Activated CD8-positive, alpha-beta T cell treated with anti-CD3 and anti-CD28 coated beads, Interleukin-2, amount 10 ng/mL, durations not matched to agents 7 days and 5 days (primary cell): ENCODE measurements at regions of chr3 and their contacts with region 1.

Region 1: GRCh38 chr3:186617038-186617946 is 4.4 kb downstream of the AHSG start:
- DNase-seq: peak; percentile 88
- ATAC-seq: peak; percentile 99
- H3K4me3 Mint-ChIP-seq: peak overlapping the region; percentile 64
- H3K27ac Mint-ChIP-seq: peak overlapping the region; percentile 59
- H3K4me1 Mint-ChIP-seq: peaks cover 24% of the 10 kb centered on the region
- H3K27me3 Mint-ChIP-seq: peaks cover 49% of the 10 kb centered on the region

Region 2: GRCh38 chr3:186259612-186260383 is 357.5 kb before region 1 on chr3:
- CTCF ChIA-PET with region 1: interaction called, 18 read pairs
- POLR2A ChIA-PET with region 1: no interaction called
- DNase-seq: peak; percentile 68
- ATAC-seq: peak; percentile 96
- H3K4me3 Mint-ChIP-seq: no peak overlapping the region
- H3K27ac Mint-ChIP-seq: no peak overlapping the region
- H3K4me1 Mint-ChIP-seq: peaks cover 11% of the 10 kb centered on the region
- H3K27me3 Mint-ChIP-seq: no peaks in the 10 kb centered on the region

Region 3: GRCh38 chr3:186540221-186540834 is 77.0 kb before region 1 on chr3:
- CTCF ChIA-PET with region 1: interaction called, 84 read pairs
- POLR2A ChIA-PET with region 1: no interaction called
- DNase-seq: peak; percentile 88
- ATAC-seq: peak; percentile 91
- H3K4me3 Mint-ChIP-seq: no peak overlapping the region
- H3K27ac Mint-ChIP-seq: no peak overlapping the region
- H3K4me1 Mint-ChIP-seq: peaks cover 11% of the 10 kb centered on the region
- H3K27me3 Mint-ChIP-seq: no peaks in the 10 kb centered on the region

Region 4: DNA sequence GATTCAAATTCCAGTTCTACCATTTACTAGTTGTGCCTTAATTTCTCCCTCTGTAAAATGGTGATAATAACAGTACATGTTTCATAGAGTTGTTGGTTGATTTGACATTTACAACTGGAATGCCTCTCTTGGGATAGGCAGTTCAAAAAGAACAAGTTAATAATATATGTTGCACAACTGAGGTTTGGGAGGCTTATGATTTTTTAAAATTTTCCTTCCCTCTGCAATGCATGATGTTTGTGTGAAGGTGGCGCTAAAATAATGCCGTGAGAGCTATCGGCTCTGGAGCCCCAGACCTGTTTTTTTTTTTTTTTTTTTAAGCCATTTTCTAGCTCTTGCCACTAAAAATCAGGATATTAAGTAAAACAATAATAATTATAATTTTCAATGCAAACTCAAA is 28.2 kb before region 1 on chr3:
- CTCF ChIA-PET with region 1: interaction called, 87 read pairs
- POLR2A ChIA-PET with region 1: no interaction called
- DNase-seq: no peak
- ATAC-seq: no peak
- H3K4me3 Mint-ChIP-seq: no peak overlapping the region
- H3K27ac Mint-ChIP-seq: no peak overlapping the region
- H3K4me1 Mint-ChIP-seq: peaks cover 16% of the 10 kb centered on the region
- H3K27me3 Mint-ChIP-seq: peaks cover 2% of the 10 kb centered on the region

Region 5: DNA sequence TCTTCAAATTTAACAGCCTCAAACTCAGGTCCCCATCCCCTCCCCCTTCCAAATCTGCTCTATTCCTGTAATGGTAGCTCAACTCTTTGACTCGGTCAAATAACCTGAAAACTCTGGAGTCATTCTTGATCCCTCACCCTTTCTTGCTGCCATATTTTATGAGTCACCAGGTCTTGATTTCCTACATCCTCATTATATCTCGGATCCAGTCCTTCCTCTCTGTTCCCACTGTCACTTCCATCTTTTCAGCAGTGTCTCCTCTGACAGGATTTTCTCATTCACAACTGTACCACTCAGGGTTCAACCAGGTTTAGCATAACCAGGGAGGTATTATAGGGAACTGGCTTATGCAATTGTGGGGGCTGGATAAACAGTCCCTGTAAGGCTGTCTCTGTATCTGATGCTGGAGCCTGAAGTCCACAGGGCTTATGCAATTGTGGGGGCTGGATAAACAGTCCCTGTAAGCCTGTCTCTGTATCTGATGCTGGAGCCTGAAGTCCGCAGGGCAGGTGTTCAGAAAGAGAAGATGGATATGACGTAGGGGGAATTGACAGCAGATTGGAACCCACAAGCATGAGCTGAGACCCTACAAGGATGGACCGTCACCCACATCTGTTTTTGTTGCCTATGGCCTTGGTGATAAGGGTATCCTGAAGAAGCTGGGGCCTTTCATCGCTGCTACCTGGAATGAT is 13.8 kb after region 1 on chr3:
- CTCF ChIA-PET with region 1: interaction called, 65 read pairs
- POLR2A ChIA-PET with region 1: no interaction called
- DNase-seq: no peak
- ATAC-seq: no peak
- H3K4me3 Mint-ChIP-seq: no peak overlapping the region
- H3K27ac Mint-ChIP-seq: no peak overlapping the region
- H3K4me1 Mint-ChIP-seq: no peaks in the 10 kb centered on the region
- H3K27me3 Mint-ChIP-seq: peaks cover 15% of the 10 kb centered on the region

Region 6: GRCh38 chr3:186806089-186807055 is 189.1 kb after region 1 on chr3 and contains the start of gene RFC4:
- CTCF ChIA-PET with region 1: interaction called, 12 read pairs
- POLR2A ChIA-PET with region 1: no interaction called
- DNase-seq: peak; percentile 90
- ATAC-seq: peak; percentile 79
- H3K4me3 Mint-ChIP-seq: peak within 1 kb of the TSS; percentile 96
- H3K27ac Mint-ChIP-seq: peak within 1 kb of the TSS; percentile 96
- H3K4me1 Mint-ChIP-seq: peaks cover 47% of the 10 kb centered on the region
- H3K27me3 Mint-ChIP-seq: no peaks in the 10 kb centered on the region
- total RNA-seq, gene RFC4: 98.9 to 106 TPM